AG04449 (cell line): ENCODE measurements at regions of chr19 and their contacts with region 1.

Region 1: DNA sequence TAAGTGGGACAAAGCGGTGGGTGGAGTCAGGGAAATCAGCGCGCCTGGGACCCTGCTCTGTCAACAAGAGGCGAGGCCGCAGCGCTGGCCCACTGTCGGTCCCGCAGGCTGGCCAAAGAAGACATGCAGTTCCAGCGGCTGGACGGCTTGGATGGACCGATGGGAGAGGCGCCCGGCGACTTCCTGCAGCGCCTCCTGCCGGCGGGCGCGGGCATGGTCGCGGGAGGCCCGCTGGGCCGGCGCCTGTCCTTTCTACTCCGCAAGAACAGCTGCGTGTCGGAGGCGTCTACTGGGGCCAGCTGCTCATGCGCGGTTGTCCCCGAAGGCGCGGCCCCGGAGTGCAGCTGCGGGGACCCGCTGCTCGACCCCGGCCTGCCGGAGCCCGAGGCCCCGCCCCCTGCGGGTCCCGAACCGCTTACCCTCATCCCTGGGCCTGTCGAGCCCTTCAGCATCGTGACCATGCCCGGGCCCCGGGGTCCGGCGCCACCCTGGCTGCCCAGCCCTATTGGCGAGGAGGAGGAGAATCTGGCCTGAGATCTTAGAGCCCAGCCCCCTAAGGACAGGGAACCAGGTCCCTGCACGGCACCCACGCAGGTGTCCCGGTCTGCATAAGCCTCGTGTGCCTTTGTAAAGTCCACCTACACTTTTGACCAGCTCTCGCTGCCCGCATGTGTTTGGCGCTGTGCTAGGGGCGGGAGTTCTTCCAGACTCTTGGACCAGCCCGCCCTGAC is 6.1 kb downstream of the BEST2 start:
- DNase-seq: no peak
- H3K4me3 ChIP-seq: peak overlapping the region; percentile 50
- CTCF ChIP-seq: peak; percentile 82

Region 2: DNA sequence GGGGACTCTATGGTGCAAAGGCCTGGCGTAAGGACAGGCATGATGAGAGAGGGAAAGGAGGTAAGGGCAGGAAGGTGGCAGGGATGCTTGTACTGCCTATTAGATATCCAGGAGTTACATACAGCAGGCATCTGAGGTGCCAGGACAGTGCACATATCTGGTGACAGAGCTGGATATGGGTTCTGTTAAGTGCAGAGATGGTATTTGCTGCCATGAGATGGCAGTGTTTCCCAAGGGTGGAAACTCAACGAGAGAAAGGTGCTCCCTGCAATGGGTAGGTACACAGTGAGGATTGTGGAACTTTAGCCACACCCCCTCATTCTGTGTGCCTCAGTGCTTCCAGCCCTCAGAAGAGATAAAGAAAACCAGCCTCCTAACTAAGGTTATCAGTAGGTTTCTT is 40.8 kb before region 1 on chr19:
- CTCF ChIA-PET with region 1: interaction called, 10 read pairs
- POLR2A ChIA-PET with region 1: no interaction called
- DNase-seq: no peak
- H3K4me3 ChIP-seq: no peak overlapping the region
- CTCF ChIP-seq: peak; percentile 12

Region 3: GRCh38 chr19:12736995-12737834 is 20.5 kb before region 1 on chr19 and contains the start of gene GET3:
- CTCF ChIA-PET with region 1: interaction called, 660 read pairs
- POLR2A ChIA-PET with region 1: interaction called, 4 read pairs
- DNase-seq: peak; percentile 100
- H3K4me3 ChIP-seq: peak within 1 kb of the TSS; percentile 93
- CTCF ChIP-seq: no peak

Region 4: GRCh38 chr19:12789904-12790619 is 32.4 kb after region 1 on chr19:
- CTCF ChIA-PET with region 1: interaction called, 1,565 read pairs
- POLR2A ChIA-PET with region 1: interaction called, 9 read pairs
- DNase-seq: no peak
- H3K4me3 ChIP-seq: peak overlapping the region; percentile 55
- CTCF ChIP-seq: no peak